ENCODE measurements at regions of chr1 and their contacts with region 1.

Region 1: GRCh38 chr1:155084722-155085503 is 6.3 kb downstream of the EFNA3 start:
- DNase-seq: peak; percentile 94
- H3K4me3 Mint-ChIP-seq: peak overlapping the region; percentile 79
- H3K27ac Mint-ChIP-seq: peak overlapping the region; percentile 89
- H3K4me1 Mint-ChIP-seq: peaks cover 40% of the 10 kb centered on the region
- H3K27me3 Mint-ChIP-seq: peaks cover 34% of the 10 kb centered on the region

Region 2: GRCh38 chr1:155012026-155012546 is 72.8 kb before region 1 on chr1:
- CTCF ChIA-PET with region 1: interaction called, 18 read pairs
- POLR2A ChIA-PET with region 1: no interaction called
- DNase-seq: peak; percentile 52
- H3K4me3 Mint-ChIP-seq: peak overlapping the region; percentile 99
- H3K27ac Mint-ChIP-seq: peak overlapping the region; percentile 89
- H3K4me1 Mint-ChIP-seq: peaks cover 74% of the 10 kb centered on the region
- H3K27me3 Mint-ChIP-seq: no peaks in the 10 kb centered on the region

Region 3: DNA sequence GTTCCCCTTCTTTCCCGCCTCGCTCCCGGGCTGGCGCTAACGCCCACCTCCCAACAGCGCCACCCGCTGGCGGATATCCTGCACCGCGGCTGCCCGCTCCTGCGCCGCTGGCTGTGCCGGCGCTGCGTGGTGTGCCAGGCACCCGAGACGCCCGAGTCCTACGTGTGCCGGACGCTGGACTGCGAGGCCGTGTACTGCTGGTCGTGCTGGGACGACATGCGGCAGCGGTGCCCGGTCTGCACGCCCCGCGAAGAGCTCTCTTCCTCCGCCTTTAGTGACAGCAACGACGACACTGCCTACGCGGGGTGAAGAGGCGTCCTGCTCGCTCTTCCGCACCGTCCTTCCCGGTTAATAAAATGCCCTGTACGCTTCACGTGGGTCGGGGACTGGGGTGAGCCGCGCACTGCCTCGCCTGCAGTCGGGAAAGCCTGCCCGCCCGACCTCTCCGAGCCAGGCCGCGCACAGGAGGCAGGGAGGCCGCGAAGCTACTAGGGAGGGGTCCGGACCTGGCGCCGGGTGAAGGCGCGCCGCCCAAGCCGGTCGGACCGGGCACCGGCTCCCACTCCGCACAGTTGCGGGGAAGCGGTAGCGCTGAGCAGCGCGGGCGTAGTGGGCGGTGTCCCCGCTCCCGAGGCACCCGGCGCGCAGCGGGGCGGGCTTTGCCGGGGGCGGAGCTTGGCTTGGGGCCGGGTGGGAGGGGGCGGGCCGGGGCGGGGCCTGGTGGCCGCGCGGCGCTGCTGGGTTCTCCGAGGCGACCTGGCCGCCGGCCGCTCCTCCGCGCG is 34.2 kb before region 1 on chr1 and contains the start of gene ADAM15:
- CTCF ChIA-PET with region 1: interaction called, 20 read pairs
- POLR2A ChIA-PET with region 1: interaction called, 3 read pairs
- DNase-seq: peak; percentile 81
- H3K4me3 Mint-ChIP-seq: peak within 1 kb of the TSS; percentile 82
- H3K27ac Mint-ChIP-seq: peak within 1 kb of the TSS; percentile 81
- H3K4me1 Mint-ChIP-seq: peaks cover 30% of the 10 kb centered on the region
- H3K27me3 Mint-ChIP-seq: no peaks in the 10 kb centered on the region
- total RNA-seq, gene ADAM15: 40.2 to 45.0 TPM

Region 4: DNA sequence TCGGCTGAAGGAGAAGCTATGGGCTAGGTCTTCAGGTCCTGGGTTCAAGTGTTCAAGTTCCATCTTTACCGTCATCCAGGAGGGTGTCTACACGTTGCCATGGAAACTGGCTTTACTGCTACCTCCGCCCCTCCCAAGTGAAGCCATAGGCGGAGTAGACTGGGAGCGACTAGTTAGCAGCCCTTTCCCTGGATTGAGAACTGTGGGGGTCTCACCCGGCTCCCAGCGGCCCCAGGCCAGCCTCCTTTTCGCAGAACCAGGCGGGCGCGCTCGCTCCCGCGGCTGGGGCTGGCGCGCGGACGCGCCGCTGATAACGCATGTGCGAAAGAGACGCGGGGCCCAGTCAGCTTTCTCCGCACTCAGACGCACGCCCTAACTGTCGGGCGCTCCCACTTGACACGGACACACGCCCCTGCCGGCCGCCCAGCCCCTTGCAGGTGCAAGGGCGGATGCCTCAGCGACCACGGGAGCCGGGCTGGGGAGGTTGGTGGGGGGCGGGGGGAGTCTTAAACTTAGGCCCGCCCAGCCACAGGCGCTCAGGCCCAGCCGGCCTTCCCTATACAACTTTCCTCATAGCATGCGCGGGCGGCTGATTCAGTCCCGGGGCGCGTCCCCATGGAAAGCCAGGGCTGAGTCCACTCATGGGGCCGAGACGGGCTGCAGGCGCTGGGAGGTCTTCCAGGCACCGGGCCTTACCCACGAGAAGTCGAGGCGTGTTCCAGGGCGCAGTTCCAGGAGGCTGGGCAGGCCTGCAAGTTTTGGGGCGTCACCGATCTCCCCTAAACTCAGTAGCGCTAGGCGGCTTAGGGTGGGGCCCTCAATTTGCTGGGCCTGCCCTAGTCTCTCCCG is 14.0 kb before region 1 on chr1:
- CTCF ChIA-PET with region 1: interaction called, 24 read pairs
- POLR2A ChIA-PET with region 1: no interaction called
- DNase-seq: peak; percentile 76
- H3K4me3 Mint-ChIP-seq: no peak overlapping the region
- H3K27ac Mint-ChIP-seq: peak overlapping the region; percentile 54
- H3K4me1 Mint-ChIP-seq: peaks cover 49% of the 10 kb centered on the region
- H3K27me3 Mint-ChIP-seq: peaks cover 6% of the 10 kb centered on the region

Region 5: DNA sequence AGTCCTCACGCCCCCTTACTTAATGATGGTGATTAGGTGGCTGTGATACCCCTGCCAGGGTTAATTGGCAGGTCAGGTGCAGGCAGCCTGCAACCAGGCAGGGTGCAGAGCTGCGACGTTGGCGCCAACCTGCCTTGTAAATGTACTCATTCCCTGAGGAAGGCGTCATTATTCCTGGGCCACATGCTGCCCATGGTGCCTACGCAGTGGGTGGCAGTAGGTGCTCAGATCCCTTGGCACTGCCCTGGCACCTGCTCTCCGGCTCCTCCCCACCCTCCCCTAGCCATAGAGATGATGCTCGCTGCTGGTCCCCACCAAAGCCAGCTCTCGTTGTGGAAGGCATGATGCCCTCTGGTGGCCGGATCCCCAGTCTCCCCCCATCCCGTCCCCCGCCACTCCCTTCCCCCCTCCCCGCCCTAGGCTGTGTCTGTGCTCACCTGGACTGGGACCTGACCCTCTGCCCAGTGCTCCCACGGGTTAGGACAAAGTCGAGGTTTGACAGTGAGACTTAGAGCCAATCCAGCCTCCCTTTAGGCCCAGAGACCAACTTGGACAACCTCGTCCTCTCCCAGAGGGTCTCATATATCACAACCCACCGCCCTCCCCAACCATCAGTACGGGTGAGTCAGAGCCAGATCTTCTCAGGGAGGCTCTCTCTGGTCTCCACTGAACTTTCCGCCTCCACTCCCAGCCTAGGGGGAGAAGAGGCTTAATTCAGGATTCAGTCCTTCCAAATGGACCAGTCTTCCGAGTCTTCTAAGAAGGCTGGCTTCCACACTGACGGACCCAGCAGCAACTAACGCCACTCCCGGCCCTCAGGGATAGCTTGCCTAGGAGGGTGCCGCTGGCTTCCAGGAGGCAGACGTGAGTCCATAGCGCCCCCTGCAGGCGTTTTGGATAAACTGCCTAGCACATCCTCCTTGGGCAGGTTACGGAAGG is 82.5 kb after region 1 on chr1:
- CTCF ChIA-PET with region 1: interaction called, 67 read pairs
- POLR2A ChIA-PET with region 1: no interaction called
- DNase-seq: peak; percentile 91
- H3K4me3 Mint-ChIP-seq: peak overlapping the region; percentile 25
- H3K27ac Mint-ChIP-seq: no peak overlapping the region
- H3K4me1 Mint-ChIP-seq: peaks cover 31% of the 10 kb centered on the region
- H3K27me3 Mint-ChIP-seq: no peaks in the 10 kb centered on the region

Measured in activated CD4-positive, alpha-beta T cell treated with anti-CD3 and anti-CD28 coated beads, Interleukin-2, amount 10 ng/mL, durations not matched to agents 7 days and 5 days (primary cell).